SK-N-SH (cell line): ENCODE measurements at regions of chr10 and their contacts with region 1.

Region 1: DNA sequence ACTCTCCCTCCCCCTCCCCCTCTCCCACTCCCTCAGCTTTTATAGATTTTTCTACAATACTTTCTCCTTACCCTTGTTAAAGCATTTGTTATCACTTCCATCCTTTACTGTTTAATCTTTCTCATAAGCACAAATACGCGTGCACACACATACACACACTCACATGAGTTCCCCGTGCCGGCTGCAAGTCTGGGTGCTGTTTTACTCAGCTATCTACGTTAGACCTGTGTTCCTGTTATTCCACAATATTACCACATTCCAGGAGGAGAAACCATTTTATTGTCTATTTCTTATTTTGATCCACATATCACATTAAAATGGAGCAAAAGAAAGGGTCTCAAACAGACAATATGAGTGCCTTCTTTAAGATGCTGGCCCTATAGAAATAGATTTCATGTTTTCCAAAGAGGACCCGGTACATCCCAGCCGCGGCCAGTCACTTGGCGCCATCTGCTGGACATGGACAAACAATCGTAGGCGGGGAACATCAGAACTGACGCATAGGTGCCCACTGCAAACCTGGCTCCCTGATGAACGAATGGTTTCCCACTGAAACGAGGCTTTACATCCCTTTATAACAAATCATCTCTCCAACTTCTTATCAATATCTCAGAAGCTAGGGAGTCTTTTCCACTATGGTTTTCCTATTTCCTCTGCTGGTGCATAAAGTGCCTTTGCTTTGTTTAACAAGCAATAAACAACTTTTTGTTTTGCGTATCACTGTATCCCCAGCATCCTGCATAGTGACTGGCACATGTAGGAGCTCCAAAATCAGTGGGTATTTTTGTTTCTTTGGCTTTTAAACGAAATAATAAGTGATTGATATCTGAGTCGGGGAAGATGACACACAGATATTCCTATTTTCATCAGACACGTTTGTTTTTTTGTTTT is 25.2 kb upstream of the OPTN start:
- DNase-seq: peak; percentile 83
- H3K4me3 ChIP-seq: peak overlapping the region in 1 of 2 experiments; percentile 21; a peak in 1 of 4 replicates
- H3K27ac ChIP-seq: no peak overlapping the region
- H3K4me1 ChIP-seq: no peaks in the 10 kb centered on the region
- H3K27me3 ChIP-seq: no peaks in the 10 kb centered on the region
- CTCF ChIP-seq: peak; percentile 90
- EP300 ChIP-seq: no peak
- RAD21 ChIP-seq: peak; percentile 96

Region 2: GRCh38 chr10:12264204-12264940 is 810.4 kb before region 1 on chr10:
- CTCF ChIA-PET with region 1: interaction called, 17 read pairs
- POLR2A ChIA-PET with region 1: no interaction called
- DNase-seq: peak; percentile 88
- H3K4me3 ChIP-seq: peak overlapping the region; percentile 45 to 60
- H3K27ac ChIP-seq: peak overlapping the region in 1 of 2 experiments; percentile 45; a peak in 1 of 4 replicates
- H3K4me1 ChIP-seq: no peaks in the 10 kb centered on the region; a peak in 1 of 4 replicates
- H3K27me3 ChIP-seq: no peaks in the 10 kb centered on the region
- CTCF ChIP-seq: peak; percentile 90
- EP300 ChIP-seq: no peak; a peak in 1 of 4 replicates
- RAD21 ChIP-seq: peak; percentile 94

Region 3: GRCh38 chr10:13062803-13063202 is 12.0 kb before region 1 on chr10:
- CTCF ChIA-PET with region 1: interaction called, 33 read pairs
- POLR2A ChIA-PET with region 1: no interaction called
- DNase-seq: no peak
- H3K4me3 ChIP-seq: no peak overlapping the region
- H3K27ac ChIP-seq: no peak overlapping the region
- H3K4me1 ChIP-seq: peaks cover 0 to 3% of the 10 kb centered on the region in 2 experiments; a peak in 2 of 4 replicates
- H3K27me3 ChIP-seq: no peaks in the 10 kb centered on the region; the same call in 1 of the 2 replicates
- CTCF ChIP-seq: no peak
- EP300 ChIP-seq: no peak
- RAD21 ChIP-seq: no peak

Region 4: GRCh38 chr10:13099666-13100348 is 25.0 kb after region 1 on chr10 and contains the start of gene OPTN:
- CTCF ChIA-PET with region 1: interaction called, 29 read pairs
- POLR2A ChIA-PET with region 1: no interaction called
- DNase-seq: peak; percentile 96
- H3K4me3 ChIP-seq: peak within 1 kb of the TSS; percentile 64 to 80
- H3K27ac ChIP-seq: peak within 1 kb of the TSS; percentile 80 to 93
- H3K4me1 ChIP-seq: peaks cover 3 to 8% of the 10 kb centered on the region in 2 experiments; a peak in 1 of 4 replicates
- H3K27me3 ChIP-seq: no peaks in the 10 kb centered on the region
- CTCF ChIP-seq: peak; percentile 91
- EP300 ChIP-seq: no peak
- RAD21 ChIP-seq: peak; percentile 66
- polyA plus RNA-seq, gene OPTN: 21.6 and 22.4 TPM in 2 replicates

Region 5: GRCh38 chr10:13743101-13743693 is 668.4 kb after region 1 on chr10:
- CTCF ChIA-PET with region 1: no interaction called
- POLR2A ChIA-PET with region 1: no interaction called
- DNase-seq: no peak
- H3K4me3 ChIP-seq: no peak overlapping the region
- H3K27ac ChIP-seq: no peak overlapping the region
- H3K4me1 ChIP-seq: no peaks in the 10 kb centered on the region
- H3K27me3 ChIP-seq: no peaks in the 10 kb centered on the region
- CTCF ChIP-seq: no peak
- EP300 ChIP-seq: no peak
- RAD21 ChIP-seq: no peak